ENCODE measurements at regions of chr1 and their contacts with region 1.

Region 1: GRCh38 chr1:235067263-235068172 is 61.1 kb downstream of the TOMM20 start:
- DNase-seq: peak; percentile 98 to 100
- H3K4me3 ChIP-seq: peak overlapping the region; percentile 39; the same call in 1 of the 2 replicates
- H3K27ac ChIP-seq: peak overlapping the region; percentile 100
- H3K4me1 ChIP-seq: peaks cover 68% of the 10 kb centered on the region
- H3K27me3 ChIP-seq: no peaks in the 10 kb centered on the region
- CTCF ChIP-seq: no peak

Region 2: DNA sequence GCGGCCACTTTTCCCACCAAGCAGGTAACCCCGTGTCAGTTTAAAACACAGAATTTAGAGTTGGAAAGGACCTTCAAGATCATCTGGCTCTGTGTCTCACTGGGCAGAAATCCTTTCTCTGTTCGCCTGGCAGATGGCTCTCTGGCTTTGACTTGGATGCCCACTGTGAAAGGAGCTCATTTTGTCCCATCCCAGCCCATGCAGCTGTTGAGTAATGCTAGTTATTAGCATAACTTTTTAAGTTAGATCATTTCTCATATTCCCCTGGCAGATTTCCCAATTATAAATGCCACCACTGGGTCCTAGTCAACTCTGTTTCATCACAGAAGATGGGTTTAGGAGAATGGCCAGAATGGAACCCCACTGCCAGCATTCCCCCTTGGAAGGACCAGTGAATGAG is 1107.1 kb before region 1 on chr1:
- CTCF ChIA-PET with region 1: no interaction called
- POLR2A ChIA-PET with region 1: no interaction called
- intact Hi-C with region 1: no loop called
- DNase-seq: no peak
- H3K4me3 ChIP-seq: no peak overlapping the region
- H3K27ac ChIP-seq: no peak overlapping the region
- H3K4me1 ChIP-seq: no peaks in the 10 kb centered on the region
- H3K27me3 ChIP-seq: no peaks in the 10 kb centered on the region
- CTCF ChIP-seq: no peak

Region 3: DNA sequence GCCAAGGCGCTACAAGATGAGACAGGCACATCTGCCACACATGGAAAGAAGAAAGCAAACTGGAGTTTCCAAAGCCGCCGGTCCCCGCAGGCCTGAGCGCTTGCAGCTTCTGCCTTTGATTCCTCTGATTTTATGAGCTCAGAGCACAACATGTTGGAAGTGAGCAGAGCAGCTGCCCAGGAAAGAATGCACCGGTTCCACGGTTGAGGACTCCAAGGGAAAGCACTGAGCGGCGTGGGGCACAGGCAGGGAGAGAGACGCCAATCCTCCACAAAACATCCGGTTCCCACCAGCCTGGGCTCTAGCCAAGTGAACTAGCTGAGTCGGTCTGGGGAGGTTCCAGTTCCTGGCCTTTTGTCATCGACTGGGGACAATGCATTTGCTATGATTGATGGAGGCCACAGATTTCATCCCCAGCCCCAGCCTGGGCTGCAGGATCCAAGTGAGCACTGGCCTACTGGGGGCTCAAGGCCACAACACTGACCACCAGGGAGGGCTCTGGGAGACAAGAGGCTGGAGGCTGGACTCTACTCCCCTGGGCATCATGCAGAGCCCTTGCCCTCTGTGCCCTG is 204.5 kb before region 1 on chr1:
- CTCF ChIA-PET with region 1: no interaction called
- POLR2A ChIA-PET with region 1: no interaction called
- intact Hi-C with region 1: loop called (anchors 2 kb)
- DNase-seq: no peak
- H3K4me3 ChIP-seq: no peak overlapping the region
- H3K27ac ChIP-seq: no peak overlapping the region
- H3K4me1 ChIP-seq: peaks cover 56% of the 10 kb centered on the region
- H3K27me3 ChIP-seq: no peaks in the 10 kb centered on the region
- CTCF ChIP-seq: no peak

Region 4: DNA sequence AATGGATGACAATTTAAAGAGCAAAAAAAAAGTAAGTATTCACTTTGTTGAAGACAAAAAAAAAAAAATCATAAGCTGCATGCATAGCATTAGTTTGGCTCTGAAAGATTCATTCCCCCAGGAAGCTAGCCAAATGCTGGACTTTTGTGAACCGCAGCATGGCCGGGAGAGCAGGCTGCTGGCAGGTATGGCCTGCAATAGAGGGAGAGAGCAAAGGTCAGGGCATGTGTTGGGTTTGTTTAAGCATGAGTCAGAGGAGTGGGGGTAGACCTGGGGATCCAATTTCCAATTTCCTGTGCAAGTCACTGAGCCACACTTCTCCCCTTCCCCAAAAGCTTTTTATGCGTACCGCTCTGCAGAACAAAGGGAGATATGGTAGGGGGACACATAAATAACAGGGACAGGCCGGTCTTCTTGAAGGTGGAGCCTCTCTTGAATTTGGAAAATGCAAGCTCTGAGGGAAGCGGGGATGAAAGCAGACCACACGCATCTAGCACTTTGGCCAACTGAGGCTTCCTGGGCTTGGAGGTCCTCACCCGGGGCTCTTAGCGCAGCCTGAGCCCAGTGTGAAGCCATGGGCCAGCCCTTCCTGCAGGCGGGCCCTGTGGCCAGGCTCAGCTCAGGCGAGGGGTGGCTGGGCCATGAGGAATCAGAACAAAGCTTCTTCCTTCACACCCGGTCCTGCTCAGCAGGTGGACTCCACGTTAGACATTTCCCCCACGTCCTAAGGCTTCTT is 110.0 kb before region 1 on chr1:
- CTCF ChIA-PET with region 1: no interaction called
- POLR2A ChIA-PET with region 1: interaction called, 11 read pairs
- intact Hi-C with region 1: no loop called
- DNase-seq: peak; percentile 91 to 96
- H3K4me3 ChIP-seq: peak overlapping the region; percentile 37; the same call in 1 of the 2 replicates
- H3K27ac ChIP-seq: peak overlapping the region; percentile 99
- H3K4me1 ChIP-seq: peaks cover 82% of the 10 kb centered on the region
- H3K27me3 ChIP-seq: no peaks in the 10 kb centered on the region
- CTCF ChIP-seq: no peak

Region 5: GRCh38 chr1:234987415-234988154 is 79.9 kb before region 1 on chr1:
- CTCF ChIA-PET with region 1: no interaction called
- POLR2A ChIA-PET with region 1: interaction called, 4 read pairs
- intact Hi-C with region 1: loop called (anchors 1 kb)
- DNase-seq: peak; percentile 88
- H3K4me3 ChIP-seq: no peak overlapping the region
- H3K27ac ChIP-seq: peak overlapping the region; percentile 96
- H3K4me1 ChIP-seq: peaks cover 66% of the 10 kb centered on the region
- H3K27me3 ChIP-seq: no peaks in the 10 kb centered on the region
- CTCF ChIP-seq: no peak

Region 6: GRCh38 chr1:235011599-235012435 is 55.7 kb before region 1 on chr1:
- CTCF ChIA-PET with region 1: no interaction called
- POLR2A ChIA-PET with region 1: interaction called, 7 read pairs
- intact Hi-C with region 1: loop called (anchors 1 kb)
- DNase-seq: peak; percentile 89 to 98
- H3K4me3 ChIP-seq: peak overlapping the region; percentile 28; the same call in 1 of the 2 replicates
- H3K27ac ChIP-seq: peak overlapping the region; percentile 98
- H3K4me1 ChIP-seq: peaks cover 35% of the 10 kb centered on the region
- H3K27me3 ChIP-seq: no peaks in the 10 kb centered on the region
- CTCF ChIP-seq: no peak

Measured in PC-9 (cell line).